Gastrocnemius medialis (tissue), 4 donors: ENCODE measurements at regions of chr12 and their contacts with region 1.

Region 1: DNA sequence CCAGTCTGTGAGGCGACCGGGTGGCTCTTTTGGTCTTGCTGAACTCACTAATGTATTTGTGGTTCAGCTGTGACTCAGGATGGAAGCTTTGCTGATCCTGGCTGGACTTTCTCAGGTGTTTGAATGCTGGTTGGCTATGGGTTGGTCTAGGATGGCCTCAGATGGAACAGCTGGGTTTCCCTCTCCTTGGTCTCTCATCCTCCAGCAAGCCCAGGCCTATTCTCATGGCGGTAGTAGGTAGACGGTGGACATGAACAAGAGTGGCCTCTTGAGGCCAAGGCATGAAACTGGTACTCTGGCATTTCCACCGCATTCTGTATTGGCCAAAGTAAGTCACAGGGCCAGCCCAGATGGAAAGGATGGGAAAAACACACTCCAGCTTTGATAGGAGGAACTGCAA is 11.8 kb upstream of the POLR3B start:
- DNase-seq: peak; percentile 33 to 69
- ATAC-seq: peak; percentile 59 to 62
- H3K4me3 ChIP-seq: no peak overlapping the region
- H3K27ac ChIP-seq: peak overlapping the region; percentile 66 to 88 (median 80)
- H3K4me1 ChIP-seq: peaks cover 31 to 39% of the 10 kb centered on the region in 2 donors
- H3K27me3 ChIP-seq: no peaks in the 10 kb centered on the region
- CTCF ChIP-seq: peak; percentile 45 to 69 (median 53)
- POLR2A ChIP-seq: no peak

Region 2: GRCh38 chr12:105912882-105913713 is 432.6 kb before region 1 on chr12:
- in situ Hi-C with region 1: no loop called
- intact Hi-C with region 1: no loop called
- DNase-seq: no peak
- ATAC-seq: no peak
- H3K4me3 ChIP-seq: no peak overlapping the region
- H3K27ac ChIP-seq: no peak overlapping the region
- H3K4me1 ChIP-seq: no peaks in the 10 kb centered on the region
- H3K27me3 ChIP-seq: no peaks in the 10 kb centered on the region
- CTCF ChIP-seq: no peak
- POLR2A ChIP-seq: no peak

Region 3: DNA sequence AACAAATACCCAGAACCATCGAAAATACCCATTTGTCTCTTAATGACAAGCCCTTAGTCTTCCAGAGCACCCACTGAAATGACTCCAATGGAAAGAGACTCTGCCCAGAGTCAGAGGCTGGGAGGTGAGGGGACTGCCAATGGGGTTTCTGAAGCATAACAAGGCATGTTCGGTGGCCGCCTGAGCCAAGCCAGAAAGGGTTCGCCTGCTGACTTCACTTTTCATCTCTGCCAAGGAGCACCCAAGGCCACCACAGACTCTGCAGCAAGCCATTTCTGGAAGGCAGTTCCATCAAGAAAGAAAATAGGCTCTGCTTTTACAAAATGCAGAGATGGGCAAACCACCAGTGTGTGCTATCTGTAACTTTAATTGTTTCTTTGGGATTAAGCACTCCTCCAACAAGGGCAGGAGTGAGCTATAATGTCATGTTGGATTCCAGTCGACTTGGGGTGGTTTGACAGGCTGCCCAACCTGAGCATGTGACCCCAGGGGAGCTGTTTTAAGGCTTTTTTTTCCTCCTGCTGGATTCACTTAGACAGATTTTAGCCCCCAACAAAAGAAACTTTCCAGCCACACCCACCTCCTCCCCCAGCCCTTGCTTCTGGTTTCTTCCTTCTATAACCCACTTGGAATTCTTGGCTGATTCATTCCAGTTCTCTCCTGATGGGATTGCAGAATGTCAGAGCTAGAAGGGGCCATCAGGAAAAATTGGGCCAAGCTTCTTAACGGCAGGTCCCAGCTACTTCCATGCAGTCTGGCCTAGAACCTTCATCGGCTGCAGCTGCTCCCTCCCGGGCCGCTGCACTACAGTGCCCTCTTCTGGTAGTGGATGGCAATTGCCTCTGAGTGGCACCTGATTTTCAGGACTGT is 122.0 kb before region 1 on chr12:
- in situ Hi-C with region 1: loop called (anchors 5 to 10 kb)
- intact Hi-C with region 1: loop called (anchors 1 kb)
- DNase-seq: peak; percentile 45 to 65
- ATAC-seq: peak; percentile 57 to 75
- H3K4me3 ChIP-seq: no peak overlapping the region
- H3K27ac ChIP-seq: no peak overlapping the region
- H3K4me1 ChIP-seq: peaks cover 8 to 17% of the 10 kb centered on the region in 2 donors
- H3K27me3 ChIP-seq: no peaks in the 10 kb centered on the region
- CTCF ChIP-seq: peak; percentile 82 to 97 (median 91)
- POLR2A ChIP-seq: no peak

Region 4: DNA sequence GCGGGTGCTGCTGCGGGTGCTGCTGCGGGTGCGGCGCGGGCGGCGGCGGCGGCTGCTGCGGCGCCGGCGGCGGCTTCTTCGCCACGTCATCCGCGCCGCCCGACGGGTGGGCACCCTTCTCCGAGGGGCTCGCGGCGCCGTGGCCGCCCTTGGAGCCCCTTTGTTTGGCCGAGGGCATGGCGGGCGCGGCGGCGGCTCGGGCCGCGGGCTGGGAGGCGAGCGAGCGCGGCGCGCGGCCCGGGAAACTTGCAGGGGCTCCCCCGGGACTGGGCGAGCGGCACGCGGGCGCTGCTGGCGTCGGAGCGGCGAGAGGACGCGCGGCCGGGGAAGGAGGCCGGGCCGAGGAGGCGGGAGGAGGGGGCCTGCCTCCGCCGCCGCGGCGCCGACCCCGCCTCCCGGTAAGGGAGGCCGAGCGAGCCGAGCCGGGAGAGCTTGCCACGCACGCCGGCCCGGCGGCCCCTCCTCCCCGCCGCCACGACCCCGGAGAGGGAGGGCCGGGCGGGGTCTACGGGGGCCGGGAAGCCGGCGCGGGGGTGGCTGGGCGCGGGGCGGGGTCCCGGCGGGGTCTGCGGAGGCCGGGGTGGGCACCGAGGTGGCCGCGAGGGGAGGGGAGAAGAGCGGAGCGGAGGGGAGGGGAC is 97.9 kb before region 1 on chr12 and contains the start of gene CKAP4:
- in situ Hi-C with region 1: no loop called
- intact Hi-C with region 1: loop called (anchors 2 kb)
- DNase-seq: peak; percentile 53 to 63
- ATAC-seq: peak; percentile 61 to 73
- H3K4me3 ChIP-seq: peak within 1 kb of the TSS; percentile 65 to 91 (median 86)
- H3K27ac ChIP-seq: peak within 1 kb of the TSS; percentile 90 to 95 (median 94)
- H3K4me1 ChIP-seq: peaks cover 39 to 42% of the 10 kb centered on the region in 2 donors
- H3K27me3 ChIP-seq: no peaks in the 10 kb centered on the region
- CTCF ChIP-seq: peak in 1 of 5 experiments; percentile 3
- POLR2A ChIP-seq: peak; percentile 61 to 62
- total RNA-seq, gene CKAP4: 9.7 to 17.6 (median 15.7) TPM

Region 5: DNA sequence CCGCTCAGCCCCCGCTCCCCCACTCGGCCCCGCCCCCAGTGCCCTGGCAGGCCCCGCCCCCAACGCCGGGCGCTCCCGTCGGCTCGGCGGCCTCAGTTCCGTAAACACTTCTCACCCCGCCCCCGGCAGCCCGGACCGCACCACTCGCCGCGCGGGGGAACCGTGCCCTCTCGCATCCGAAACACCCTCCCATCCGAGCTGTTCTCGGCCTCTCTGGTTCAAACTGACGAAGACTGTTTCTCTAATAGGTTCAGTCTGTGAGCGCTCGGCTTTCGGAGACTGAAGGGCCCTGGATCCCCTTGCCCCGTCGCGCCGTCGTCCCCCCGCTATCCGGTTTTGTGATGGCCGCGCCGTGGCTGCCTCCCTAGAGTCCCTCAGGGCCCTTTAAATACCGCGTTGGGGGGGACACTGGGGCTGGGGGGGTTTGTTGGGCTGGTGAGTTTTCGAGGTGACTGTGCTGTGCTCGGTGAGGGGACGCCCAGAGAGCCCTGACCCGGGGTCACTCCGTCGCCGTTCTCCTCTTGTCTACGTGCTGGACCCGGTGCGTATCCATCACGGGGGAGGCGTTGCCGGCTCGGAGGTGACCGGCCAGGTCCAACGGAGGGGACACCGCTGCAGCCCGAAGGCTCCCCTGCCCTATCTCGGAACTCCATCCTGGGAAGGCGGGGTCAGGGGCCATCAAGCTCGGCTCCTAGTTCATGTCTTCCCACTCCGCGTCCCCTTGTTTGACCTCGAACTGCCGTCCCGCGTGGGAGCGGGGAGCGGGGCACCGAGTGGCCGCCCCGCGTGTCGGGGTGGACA is 43.1 kb before region 1 on chr12 and contains the start of gene TCP11L2:
- in situ Hi-C with region 1: loop called in 1 of 4 experiments (anchors 10 kb)
- intact Hi-C with region 1: loop called (anchors 2 kb)
- DNase-seq: peak; percentile 84 to 86
- ATAC-seq: peak; percentile 57 to 61
- H3K4me3 ChIP-seq: peak within 1 kb of the TSS; percentile 73 to 86 (median 78)
- H3K27ac ChIP-seq: peak within 1 kb of the TSS; percentile 91 to 97 (median 94)
- H3K4me1 ChIP-seq: peaks cover 67 to 70% of the 10 kb centered on the region in 2 donors
- H3K27me3 ChIP-seq: no peaks in the 10 kb centered on the region
- CTCF ChIP-seq: peak in 1 of 5 experiments; percentile 12
- POLR2A ChIP-seq: peak; percentile 79 to 92
- total RNA-seq, gene TCP11L2: 39.1 to 51.7 (median 43.9) TPM

Region 6: DNA sequence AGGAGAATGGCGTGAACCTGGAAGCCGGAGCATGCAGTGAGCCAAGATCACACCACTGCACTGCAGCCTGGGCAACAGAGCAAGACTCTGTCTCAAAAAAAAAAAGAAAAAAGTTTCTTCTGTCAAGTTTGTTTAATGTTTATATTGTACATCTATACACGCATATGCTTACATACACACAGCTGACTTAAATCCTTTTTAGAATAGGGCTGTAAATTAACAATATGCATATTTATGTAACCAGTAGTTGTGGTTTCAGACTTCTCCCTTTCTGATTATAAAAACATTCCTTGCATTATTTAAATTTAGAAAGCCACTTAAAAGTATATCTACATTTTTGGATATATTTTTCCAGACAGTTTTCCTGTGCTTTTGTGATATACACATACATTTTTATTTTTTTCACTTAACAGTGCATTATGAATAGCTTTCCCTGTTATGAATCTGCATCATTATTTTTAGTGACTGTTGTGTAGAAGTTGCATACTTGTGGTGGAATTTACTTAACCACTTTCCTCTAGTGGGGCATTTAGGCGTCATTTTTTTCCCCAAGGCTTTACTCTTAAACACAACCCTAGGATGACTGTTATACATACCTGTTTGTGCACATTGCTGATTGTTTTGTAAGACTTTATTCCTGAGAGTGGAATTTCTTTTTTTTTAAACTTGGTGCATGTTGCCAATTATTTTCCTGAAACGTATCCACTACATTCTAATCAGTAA is 41.2 kb after region 1 on chr12:
- in situ Hi-C with region 1: no loop called
- intact Hi-C with region 1: no loop called
- DNase-seq: no peak
- ATAC-seq: no peak
- H3K4me3 ChIP-seq: no peak overlapping the region
- H3K27ac ChIP-seq: no peak overlapping the region
- H3K4me1 ChIP-seq: no peaks in the 10 kb centered on the region
- H3K27me3 ChIP-seq: no peaks in the 10 kb centered on the region
- CTCF ChIP-seq: no peak
- POLR2A ChIP-seq: no peak

Region 7: GRCh38 chr12:106498056-106498455 is 152.3 kb after region 1 on chr12:
- in situ Hi-C with region 1: no loop called
- intact Hi-C with region 1: no loop called
- DNase-seq: no peak
- ATAC-seq: no peak
- H3K4me3 ChIP-seq: no peak overlapping the region
- H3K27ac ChIP-seq: no peak overlapping the region
- H3K4me1 ChIP-seq: no peaks in the 10 kb centered on the region
- H3K27me3 ChIP-seq: no peaks in the 10 kb centered on the region
- CTCF ChIP-seq: no peak
- POLR2A ChIP-seq: no peak

Region 8: DNA sequence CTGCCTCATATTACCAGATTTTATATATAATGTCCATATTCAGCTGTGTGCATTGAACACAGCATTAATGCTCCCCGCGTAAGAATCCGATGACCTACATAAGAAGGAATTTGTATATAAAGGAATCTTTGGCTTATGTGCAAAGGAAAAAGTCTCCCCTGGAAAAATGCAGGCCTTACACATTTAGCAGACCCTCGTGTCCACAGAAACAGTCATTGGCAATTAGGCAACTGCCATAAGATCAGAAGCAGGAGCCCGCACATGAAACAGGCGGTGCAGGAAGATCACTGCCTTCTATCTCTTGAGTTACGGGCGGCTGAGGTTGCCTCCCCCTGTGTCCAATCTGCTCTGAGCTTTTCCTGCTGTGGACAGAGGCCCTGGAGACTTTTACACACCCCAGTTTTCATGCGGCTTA is 173.9 kb after region 1 on chr12:
- in situ Hi-C with region 1: no loop called
- intact Hi-C with region 1: no loop called
- DNase-seq: no peak
- ATAC-seq: no peak
- H3K4me3 ChIP-seq: no peak overlapping the region
- H3K27ac ChIP-seq: no peak overlapping the region
- H3K4me1 ChIP-seq: no peaks in the 10 kb centered on the region
- H3K27me3 ChIP-seq: no peaks in the 10 kb centered on the region
- CTCF ChIP-seq: no peak
- POLR2A ChIP-seq: no peak